Activated naive CD4-positive, alpha-beta T cell treated with anti-CD3 and anti-CD28 coated beads, Interleukin-2, amount 10 ng/mL, durations not matched to agents 7 days and 5 days (primary cell): ENCODE measurements at regions of chr11 and their contacts with region 1.

Region 1: DNA sequence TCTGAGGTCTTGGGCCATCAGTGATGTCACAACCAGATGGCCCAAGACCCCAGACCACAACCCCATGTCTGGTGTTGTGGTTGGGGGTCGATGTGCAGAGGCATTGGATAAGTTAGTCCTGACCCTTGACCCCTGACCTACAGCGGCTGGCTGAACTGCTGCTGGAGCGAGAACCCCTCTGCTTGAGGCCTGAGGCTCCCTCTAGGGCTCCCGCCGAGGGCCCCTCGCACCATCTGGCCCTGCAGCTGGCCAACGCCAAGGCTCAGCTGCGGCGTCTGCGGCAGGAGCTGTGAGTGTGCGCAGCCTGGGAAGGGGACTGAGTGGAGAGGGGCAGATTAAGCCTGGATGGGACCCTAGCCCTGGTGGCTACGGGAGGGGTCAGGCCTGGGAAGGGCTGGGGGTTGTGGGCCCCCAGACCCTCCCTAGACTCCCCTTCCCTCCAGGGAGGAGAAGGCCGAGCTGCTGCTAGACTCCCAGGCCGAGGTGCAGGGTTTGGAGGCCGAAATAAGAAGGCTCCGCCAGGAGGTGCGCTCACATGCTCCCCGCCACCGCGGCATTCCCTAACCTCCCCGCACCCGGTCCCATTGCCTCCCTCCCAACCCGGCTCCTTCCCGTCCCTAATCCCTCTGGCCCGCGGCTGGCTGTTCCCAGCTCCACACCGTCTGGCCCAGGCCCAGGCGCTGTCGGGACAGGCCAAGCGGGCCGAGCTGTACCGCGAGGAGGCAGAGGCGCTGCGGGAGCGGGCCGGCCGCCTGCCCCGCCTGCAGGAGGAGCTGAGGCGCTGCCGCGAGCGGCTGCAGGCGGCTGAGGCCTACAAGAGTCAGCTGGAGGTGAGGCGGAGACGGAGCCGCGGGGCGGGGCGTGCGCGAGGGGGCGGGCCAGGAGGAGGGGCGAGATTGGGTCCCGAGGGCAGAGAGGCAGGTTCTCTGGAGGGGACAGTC is 2.1 kb downstream of the CCDC88B start:
- DNase-seq: peak; percentile 96
- H3K4me3 Mint-ChIP-seq: peak overlapping the region; percentile 89
- H3K27ac Mint-ChIP-seq: peak overlapping the region; percentile 69
- H3K4me1 Mint-ChIP-seq: peaks cover 50% of the 10 kb centered on the region
- H3K27me3 Mint-ChIP-seq: no peaks in the 10 kb centered on the region

Region 2: GRCh38 chr11:64196626-64197025 is 145.5 kb before region 1 on chr11:
- CTCF ChIA-PET with region 1: no interaction called
- DNase-seq: no peak
- H3K4me3 Mint-ChIP-seq: no peak overlapping the region
- H3K27ac Mint-ChIP-seq: no peak overlapping the region
- H3K4me1 Mint-ChIP-seq: peaks cover 15% of the 10 kb centered on the region
- H3K27me3 Mint-ChIP-seq: no peaks in the 10 kb centered on the region

Region 3: GRCh38 chr11:64317957-64318693 is 24.0 kb before region 1 on chr11 and contains the start of gene PRDX5:
- CTCF ChIA-PET with region 1: interaction called, 11 read pairs
- DNase-seq: peak; percentile 97
- H3K4me3 Mint-ChIP-seq: peak within 1 kb of the TSS; percentile 97
- H3K27ac Mint-ChIP-seq: peak within 1 kb of the TSS; percentile 100
- H3K4me1 Mint-ChIP-seq: peaks cover 55% of the 10 kb centered on the region
- H3K27me3 Mint-ChIP-seq: no peaks in the 10 kb centered on the region

Region 4: GRCh38 chr11:64331557-64332371 is 10.4 kb before region 1 on chr11:
- CTCF ChIA-PET with region 1: interaction called, 26 read pairs
- DNase-seq: peak; percentile 81
- H3K4me3 Mint-ChIP-seq: no peak overlapping the region
- H3K27ac Mint-ChIP-seq: peak overlapping the region; percentile 8
- H3K4me1 Mint-ChIP-seq: peaks cover 13% of the 10 kb centered on the region
- H3K27me3 Mint-ChIP-seq: peaks cover 7% of the 10 kb centered on the region

Region 5: GRCh38 chr11:64358907-64359711 is 17.0 kb after region 1 on chr11 and contains the start of gene RPS6KA4:
- CTCF ChIA-PET with region 1: interaction called, 42 read pairs
- DNase-seq: peak; percentile 68
- H3K4me3 Mint-ChIP-seq: peak within 1 kb of the TSS; percentile 89
- H3K27ac Mint-ChIP-seq: peak within 1 kb of the TSS; percentile 85
- H3K4me1 Mint-ChIP-seq: peaks cover 39% of the 10 kb centered on the region
- H3K27me3 Mint-ChIP-seq: no peaks in the 10 kb centered on the region